Endothelial cell of umbilical vein (primary cell): ENCODE measurements at regions of chr1 and their contacts with region 1.

Region 1: DNA sequence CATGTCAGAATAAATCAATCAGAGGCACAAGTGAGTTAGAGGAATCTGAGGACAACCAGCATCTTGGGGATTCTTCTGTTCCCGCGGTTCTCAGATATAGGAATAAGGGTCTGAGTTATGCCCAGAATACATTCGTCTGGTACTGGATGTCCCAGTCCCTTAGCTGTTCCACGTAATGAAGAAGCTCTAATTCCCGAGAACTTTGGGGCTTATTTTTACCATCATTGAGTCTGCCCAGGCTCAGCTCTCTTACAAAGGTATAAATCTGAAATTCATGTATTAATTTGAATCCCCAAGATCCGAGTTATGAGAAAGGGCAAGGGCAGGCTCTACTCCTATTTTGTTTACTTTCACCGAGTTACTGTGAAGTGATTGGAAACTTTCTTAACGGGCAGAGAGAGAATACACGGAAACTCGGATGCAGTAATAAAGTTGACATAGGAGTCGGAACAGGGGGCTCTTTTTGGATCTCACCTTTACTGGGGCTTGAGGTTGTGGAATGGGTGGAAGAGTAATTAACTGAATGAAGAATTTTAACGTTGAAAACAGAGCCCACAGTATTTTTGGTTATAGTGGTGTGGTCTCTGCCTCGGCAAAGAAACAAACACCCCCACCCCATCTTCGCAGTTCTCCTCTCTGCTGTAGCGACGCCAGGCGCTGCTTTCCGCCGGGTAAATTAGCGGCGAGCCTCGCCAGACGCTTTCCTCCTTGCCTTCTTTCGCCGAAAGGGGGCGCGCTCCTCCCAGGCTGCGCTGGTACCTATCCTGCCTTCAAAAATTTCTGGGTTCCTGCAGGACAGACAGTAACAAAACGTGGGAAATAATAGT is 7.1 kb downstream of the PRRX1 start:
- DNase-seq: peak; percentile 43
- H3K4me3 ChIP-seq: no peak overlapping the region
- H3K27ac ChIP-seq: no peak overlapping the region
- H3K4me1 ChIP-seq: no peaks in the 10 kb centered on the region
- H3K27me3 ChIP-seq: peaks cover 22 to 27% of the 10 kb centered on the region in 2 experiments
- CTCF ChIP-seq: peak; percentile 86 to 89
- POLR2A ChIP-seq: no peak

Region 2: DNA sequence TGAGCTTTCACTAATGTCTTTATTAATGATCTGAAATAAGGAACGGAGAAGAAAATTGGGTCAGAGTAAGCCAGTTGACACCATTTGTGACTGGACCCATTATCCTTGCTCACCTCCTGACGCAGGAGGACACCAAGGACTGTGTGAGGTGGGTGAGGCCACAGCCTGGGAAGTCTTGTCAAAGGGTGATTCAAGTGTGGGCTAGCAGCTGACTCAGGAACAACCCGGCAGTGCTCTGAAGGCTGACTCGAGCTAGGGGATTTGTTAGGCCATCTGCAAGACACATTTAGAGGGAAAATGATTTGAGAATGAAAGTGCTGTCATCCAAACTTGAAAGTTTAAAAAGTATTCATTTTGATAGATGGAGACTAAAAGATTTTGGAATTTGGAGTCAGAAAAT is 14.2 kb after region 1 on chr1:
- CTCF ChIA-PET with region 1: interaction called, 45 read pairs
- POLR2A ChIA-PET with region 1: no interaction called
- dilution Hi-C with region 1: no loop called
- intact Hi-C with region 1: no loop called
- DNase-seq: no peak
- H3K4me3 ChIP-seq: no peak overlapping the region
- H3K27ac ChIP-seq: no peak overlapping the region
- H3K4me1 ChIP-seq: peaks cover 7% of the 10 kb centered on the region
- H3K27me3 ChIP-seq: no peaks in the 10 kb centered on the region
- CTCF ChIP-seq: no peak
- POLR2A ChIP-seq: no peak

Region 3: GRCh38 chr1:170765712-170766330 is 94.8 kb after region 1 on chr1:
- CTCF ChIA-PET with region 1: no interaction called
- POLR2A ChIA-PET with region 1: no interaction called
- dilution Hi-C with region 1: no loop called
- intact Hi-C with region 1: loop called (anchors 1 kb)
- DNase-seq: peak; percentile 32
- H3K4me3 ChIP-seq: no peak overlapping the region
- H3K27ac ChIP-seq: no peak overlapping the region
- H3K4me1 ChIP-seq: no peaks in the 10 kb centered on the region
- H3K27me3 ChIP-seq: no peaks in the 10 kb centered on the region
- CTCF ChIP-seq: peak; percentile 19 to 39
- POLR2A ChIP-seq: no peak

Region 4: DNA sequence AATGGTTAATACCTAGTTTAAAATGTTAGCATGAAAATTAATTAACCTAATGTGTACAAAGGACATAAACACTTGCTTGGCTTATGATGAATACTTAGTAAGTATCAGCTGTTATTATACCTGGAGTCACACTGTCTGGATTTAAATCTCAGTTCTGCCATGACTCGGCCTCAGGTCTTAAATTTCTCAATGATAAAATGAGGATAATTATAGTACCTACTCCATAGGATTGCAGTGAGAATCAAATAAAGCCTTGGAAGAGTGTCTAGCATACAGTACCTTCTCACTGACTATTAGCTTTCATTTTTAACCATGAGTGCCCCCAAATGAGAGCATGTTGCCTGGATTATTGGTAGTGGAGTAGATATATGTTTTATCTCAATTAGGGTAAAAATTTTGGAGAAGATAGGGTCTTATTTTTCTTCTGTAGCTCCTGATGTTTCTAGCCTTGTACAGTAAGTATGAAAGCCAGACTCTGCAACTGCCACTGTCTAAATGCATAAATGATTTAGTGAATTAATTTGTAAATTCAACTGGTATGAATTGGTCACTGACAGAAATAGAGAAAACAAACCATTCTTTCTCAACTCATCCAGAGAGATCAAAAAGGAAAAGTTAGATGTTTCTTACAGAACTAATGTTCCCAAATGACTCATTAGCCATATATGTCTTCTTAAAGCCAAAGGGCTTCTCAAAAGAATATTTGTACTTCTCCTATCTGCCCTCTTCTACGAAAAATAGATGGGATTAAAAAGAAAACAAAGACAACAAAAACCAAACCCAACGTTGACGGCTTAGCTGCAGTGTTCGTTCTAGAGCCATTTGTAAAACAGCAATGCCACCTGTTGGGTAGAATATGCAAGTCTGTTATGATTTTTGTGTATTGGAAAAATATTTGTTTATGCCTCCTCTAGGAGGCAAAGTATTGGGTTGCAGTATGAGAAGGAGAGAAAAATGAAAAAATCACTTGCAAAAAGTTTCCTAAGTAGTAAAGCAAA is 210.6 kb after region 1 on chr1:
- CTCF ChIA-PET with region 1: interaction called, 3 read pairs
- POLR2A ChIA-PET with region 1: no interaction called
- dilution Hi-C with region 1: no loop called
- intact Hi-C with region 1: loop called (anchors 1 kb)
- DNase-seq: peak; percentile 39
- H3K4me3 ChIP-seq: no peak overlapping the region
- H3K27ac ChIP-seq: no peak overlapping the region
- H3K4me1 ChIP-seq: no peaks in the 10 kb centered on the region
- H3K27me3 ChIP-seq: no peaks in the 10 kb centered on the region
- CTCF ChIP-seq: peak in 1 of 2 donors; percentile 19
- POLR2A ChIP-seq: no peak

Region 5: DNA sequence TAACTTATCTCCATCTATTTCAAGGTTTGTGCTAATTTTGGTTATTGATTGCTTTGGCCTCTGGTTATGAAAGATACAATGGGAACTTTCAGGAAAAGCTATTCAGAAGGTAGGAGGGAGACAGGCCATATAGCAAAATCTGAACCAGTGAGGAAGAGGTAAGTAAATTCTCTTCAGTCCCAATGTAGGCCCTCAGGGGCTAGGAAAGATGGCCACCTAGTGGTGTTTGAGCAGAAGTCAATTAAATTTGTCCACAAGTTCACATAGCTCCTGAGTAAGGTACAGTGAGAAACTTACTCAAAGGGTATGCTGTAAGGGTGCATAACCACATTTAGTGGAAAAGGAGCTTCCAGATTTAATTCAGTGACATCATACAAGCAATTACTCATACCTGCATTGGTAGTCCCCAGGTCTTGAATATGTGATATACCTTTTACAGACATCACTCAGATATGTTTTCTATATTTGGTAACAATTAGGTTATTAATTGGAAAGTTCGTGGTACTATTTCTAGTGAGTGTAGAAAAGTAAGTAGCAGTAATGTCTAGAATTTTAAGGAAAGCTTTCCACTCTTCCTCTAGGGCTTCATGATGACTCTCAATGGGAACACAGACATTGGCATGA is 555.8 kb after region 1 on chr1:
- CTCF ChIA-PET with region 1: no interaction called
- POLR2A ChIA-PET with region 1: no interaction called
- dilution Hi-C with region 1: no loop called
- intact Hi-C with region 1: loop called (anchors 10 kb)
- DNase-seq: peak; percentile 57
- H3K4me3 ChIP-seq: no peak overlapping the region
- H3K27ac ChIP-seq: no peak overlapping the region
- H3K4me1 ChIP-seq: no peaks in the 10 kb centered on the region
- H3K27me3 ChIP-seq: no peaks in the 10 kb centered on the region
- CTCF ChIP-seq: peak; percentile 44 to 53
- POLR2A ChIP-seq: no peak